Naive thymus-derived CD4-positive, alpha-beta T cell (primary cell): ENCODE measurements at regions of chr1 and their contacts with region 1.

Region 1: DNA sequence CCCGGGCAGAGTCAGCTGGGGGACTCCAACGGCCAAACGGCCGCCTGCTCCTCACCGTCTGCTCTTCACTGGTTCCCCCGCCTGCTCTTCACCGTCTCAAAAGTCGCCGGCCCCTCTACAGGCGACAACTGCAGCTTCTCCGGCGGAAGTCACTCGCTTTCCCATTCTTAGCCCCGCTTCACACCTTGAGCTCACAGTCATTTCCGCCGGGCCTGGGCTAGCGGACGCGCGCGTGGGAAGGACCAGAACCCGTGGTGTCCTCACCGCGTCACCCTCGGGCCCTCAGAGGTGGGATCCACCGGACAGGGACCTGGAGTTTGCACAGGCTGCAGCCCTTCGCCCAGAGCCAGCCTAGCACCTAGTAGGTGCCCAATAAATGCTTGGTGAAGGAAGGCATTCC is 27.9 kb upstream of the HJV start:
- DNase-seq: no peak
- ATAC-seq: no peak
- H3K4me3 ChIP-seq: no peak overlapping the region
- H3K4me3 Mint-ChIP-seq: no peak overlapping the region
- H3K27ac ChIP-seq: no peak overlapping the region
- H3K27ac Mint-ChIP-seq: peak overlapping the region in 2 of 9 donors; percentile 24 to 31
- H3K4me1 ChIP-seq: no peaks in the 10 kb centered on the region
- H3K4me1 Mint-ChIP-seq: peaks cover 6 to 43% (median 37%) of the 10 kb centered on the region in 7 donors
- H3K27me3 ChIP-seq: no peaks in the 10 kb centered on the region
- H3K27me3 Mint-ChIP-seq: no peaks in the 10 kb centered on the region

Region 2: GRCh38 chr1:146036965-146037646 is 12.3 kb before region 1 on chr1:
- CTCF ChIA-PET with region 1: interaction called, 5 read pairs
- POLR2A ChIA-PET with region 1: interaction called, 109 read pairs
- intact Hi-C with region 1: loop called (anchors 1 kb)
- DNase-seq: peak; percentile 52 to 88 (median 83)
- ATAC-seq: peak; percentile 66
- H3K4me3 ChIP-seq: peak overlapping the region; percentile 87
- H3K4me3 Mint-ChIP-seq: peak overlapping the region; percentile 95 to 99 (median 97)
- H3K27ac ChIP-seq: peak overlapping the region; percentile 69
- H3K27ac Mint-ChIP-seq: peak overlapping the region; percentile 93 to 100 (median 98)
- H3K4me1 ChIP-seq: peaks cover 0 to 6% of the 10 kb centered on the region in 2 donors
- H3K4me1 Mint-ChIP-seq: peaks cover 7 to 49% (median 39%) of the 10 kb centered on the region in 7 donors
- H3K27me3 ChIP-seq: no peaks in the 10 kb centered on the region
- H3K27me3 Mint-ChIP-seq: peaks cover 0 to 32% (median 0%) of the 10 kb centered on the region in 5 donors